SK-N-SH (cell line): ENCODE measurements at regions of chr3 and their contacts with region 1.

Region 1: DNA sequence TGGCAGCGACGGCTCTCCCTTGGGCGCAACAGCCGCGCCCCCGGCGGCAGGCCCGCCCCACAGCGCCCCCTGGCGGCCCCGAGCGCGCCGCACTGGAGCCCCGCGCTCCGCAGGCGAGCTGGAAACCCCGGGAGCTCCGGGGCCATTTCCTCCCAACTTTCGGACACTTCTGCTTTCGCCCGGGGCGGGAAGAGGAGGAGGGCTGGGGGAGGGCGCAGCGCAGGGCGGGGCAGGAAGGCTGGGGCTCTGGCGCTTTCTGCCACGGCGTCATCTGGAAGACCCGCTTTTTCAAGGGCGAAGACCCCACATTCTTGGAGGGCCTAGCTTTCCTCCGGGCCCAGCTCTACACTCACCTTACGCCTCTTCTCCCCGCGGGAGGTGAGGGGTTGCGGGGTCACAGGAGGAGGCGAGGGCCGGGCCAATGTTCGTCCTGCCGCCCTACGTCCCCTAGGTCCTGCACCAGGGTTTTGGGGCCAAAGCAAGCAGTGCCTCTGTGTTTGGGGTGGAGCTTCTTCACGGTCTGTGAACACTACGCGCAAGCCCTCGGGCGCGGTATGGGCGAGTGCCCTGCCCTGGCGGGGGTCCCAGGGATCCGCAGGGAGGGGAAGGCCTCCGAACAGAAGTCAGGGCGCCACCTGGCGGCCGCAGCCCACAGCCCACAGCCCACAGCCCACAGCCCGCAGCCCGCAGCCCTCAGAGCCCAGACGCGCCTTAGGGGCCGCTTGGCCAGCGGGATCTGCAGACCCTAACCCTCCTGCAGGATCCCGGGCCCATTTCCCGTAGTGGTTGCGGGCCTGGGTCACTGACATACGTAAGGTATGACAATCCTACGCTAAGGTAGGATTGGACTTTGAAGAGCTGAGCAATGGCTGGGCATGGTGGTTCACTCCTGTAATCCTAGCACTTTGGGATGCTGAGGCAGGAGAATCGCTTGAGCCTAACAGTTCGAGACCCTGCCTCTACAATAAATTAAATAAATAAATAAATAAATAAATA is 31.1 kb downstream of the FOXL2 start:
- DNase-seq: peak; percentile 93
- H3K4me3 ChIP-seq: peak overlapping the region; percentile 64 to 91
- H3K27ac ChIP-seq: peak overlapping the region in 1 of 2 experiments; percentile 76; a peak in 2 of 4 replicates
- H3K4me1 ChIP-seq: peaks cover 0 to 3% of the 10 kb centered on the region in 2 experiments; a peak in 1 of 4 replicates
- H3K27me3 ChIP-seq: no peaks in the 10 kb centered on the region
- CTCF ChIP-seq: peak; percentile 82
- EP300 ChIP-seq: no peak
- RAD21 ChIP-seq: peak; percentile 65

Region 2: GRCh38 chr3:138468886-138469285 is 446.9 kb before region 1 on chr3:
- CTCF ChIA-PET with region 1: interaction called, 25 read pairs
- POLR2A ChIA-PET with region 1: no interaction called
- DNase-seq: no peak
- H3K4me3 ChIP-seq: no peak overlapping the region
- H3K27ac ChIP-seq: no peak overlapping the region
- H3K4me1 ChIP-seq: peaks cover 0 to 5% of the 10 kb centered on the region in 2 experiments; a peak in 1 of 4 replicates
- H3K27me3 ChIP-seq: no peaks in the 10 kb centered on the region
- CTCF ChIP-seq: no peak
- EP300 ChIP-seq: no peak
- RAD21 ChIP-seq: no peak

Region 3: GRCh38 chr3:138600100-138600745 is 315.6 kb before region 1 on chr3:
- CTCF ChIA-PET with region 1: interaction called, 272 read pairs
- POLR2A ChIA-PET with region 1: interaction called, 15 read pairs
- DNase-seq: no peak
- H3K4me3 ChIP-seq: no peak overlapping the region
- H3K27ac ChIP-seq: no peak overlapping the region
- H3K4me1 ChIP-seq: no peaks in the 10 kb centered on the region
- H3K27me3 ChIP-seq: no peaks in the 10 kb centered on the region
- CTCF ChIP-seq: no peak
- EP300 ChIP-seq: no peak
- RAD21 ChIP-seq: no peak

Region 4: GRCh38 chr3:138686771-138687221 is 229.0 kb before region 1 on chr3:
- CTCF ChIA-PET with region 1: interaction called, 298 read pairs
- POLR2A ChIA-PET with region 1: no interaction called
- DNase-seq: no peak
- H3K4me3 ChIP-seq: no peak overlapping the region
- H3K27ac ChIP-seq: peak overlapping the region in 1 of 2 experiments; percentile 11; a peak in 2 of 4 replicates
- H3K4me1 ChIP-seq: peaks cover 0 to 5% of the 10 kb centered on the region in 2 experiments; a peak in 1 of 4 replicates
- H3K27me3 ChIP-seq: no peaks in the 10 kb centered on the region
- CTCF ChIP-seq: no peak
- EP300 ChIP-seq: no peak
- RAD21 ChIP-seq: no peak

Region 5: GRCh38 chr3:138842483-138843188 is 73.2 kb before region 1 on chr3:
- CTCF ChIA-PET with region 1: interaction called, 13 read pairs
- POLR2A ChIA-PET with region 1: no interaction called
- DNase-seq: no peak
- H3K4me3 ChIP-seq: no peak overlapping the region
- H3K27ac ChIP-seq: no peak overlapping the region
- H3K4me1 ChIP-seq: no peaks in the 10 kb centered on the region
- H3K27me3 ChIP-seq: no peaks in the 10 kb centered on the region
- CTCF ChIP-seq: no peak
- EP300 ChIP-seq: no peak
- RAD21 ChIP-seq: no peak

Region 6: GRCh38 chr3:138898301-138898700 is 17.5 kb before region 1 on chr3:
- CTCF ChIA-PET with region 1: interaction called, 50 read pairs
- POLR2A ChIA-PET with region 1: no interaction called
- DNase-seq: no peak
- H3K4me3 ChIP-seq: no peak overlapping the region
- H3K27ac ChIP-seq: no peak overlapping the region
- H3K4me1 ChIP-seq: no peaks in the 10 kb centered on the region
- H3K27me3 ChIP-seq: no peaks in the 10 kb centered on the region
- CTCF ChIP-seq: no peak
- EP300 ChIP-seq: no peak
- RAD21 ChIP-seq: no peak

Region 7: GRCh38 chr3:138946181-138947059 is 30.6 kb after region 1 on chr3:
- CTCF ChIA-PET with region 1: interaction called, 17 read pairs
- POLR2A ChIA-PET with region 1: no interaction called
- DNase-seq: peak; percentile 41
- H3K4me3 ChIP-seq: no peak overlapping the region; a peak in 2 of 4 replicates
- H3K27ac ChIP-seq: no peak overlapping the region
- H3K4me1 ChIP-seq: peaks cover 0 to 7% of the 10 kb centered on the region in 2 experiments; a peak in 2 of 4 replicates
- H3K27me3 ChIP-seq: peaks cover 97% of the 10 kb centered on the region
- CTCF ChIP-seq: no peak
- EP300 ChIP-seq: no peak
- RAD21 ChIP-seq: no peak